Activated naive CD4-positive, alpha-beta T cell treated with anti-CD3 and anti-CD28 coated beads for 36 hours (primary cell): ENCODE measurements at regions of chr16 and their contacts with region 1.

Region 1: GRCh38 chr16:12535535-12536411 is 267.9 kb downstream of the CPPED1 start:
- DNase-seq: peak; percentile 79
- H3K4me3 Mint-ChIP-seq: no peak overlapping the region
- H3K27ac Mint-ChIP-seq: peak overlapping the region; percentile 83
- H3K4me1 Mint-ChIP-seq: peaks cover 84% of the 10 kb centered on the region
- H3K27me3 Mint-ChIP-seq: no peaks in the 10 kb centered on the region

Region 2: DNA sequence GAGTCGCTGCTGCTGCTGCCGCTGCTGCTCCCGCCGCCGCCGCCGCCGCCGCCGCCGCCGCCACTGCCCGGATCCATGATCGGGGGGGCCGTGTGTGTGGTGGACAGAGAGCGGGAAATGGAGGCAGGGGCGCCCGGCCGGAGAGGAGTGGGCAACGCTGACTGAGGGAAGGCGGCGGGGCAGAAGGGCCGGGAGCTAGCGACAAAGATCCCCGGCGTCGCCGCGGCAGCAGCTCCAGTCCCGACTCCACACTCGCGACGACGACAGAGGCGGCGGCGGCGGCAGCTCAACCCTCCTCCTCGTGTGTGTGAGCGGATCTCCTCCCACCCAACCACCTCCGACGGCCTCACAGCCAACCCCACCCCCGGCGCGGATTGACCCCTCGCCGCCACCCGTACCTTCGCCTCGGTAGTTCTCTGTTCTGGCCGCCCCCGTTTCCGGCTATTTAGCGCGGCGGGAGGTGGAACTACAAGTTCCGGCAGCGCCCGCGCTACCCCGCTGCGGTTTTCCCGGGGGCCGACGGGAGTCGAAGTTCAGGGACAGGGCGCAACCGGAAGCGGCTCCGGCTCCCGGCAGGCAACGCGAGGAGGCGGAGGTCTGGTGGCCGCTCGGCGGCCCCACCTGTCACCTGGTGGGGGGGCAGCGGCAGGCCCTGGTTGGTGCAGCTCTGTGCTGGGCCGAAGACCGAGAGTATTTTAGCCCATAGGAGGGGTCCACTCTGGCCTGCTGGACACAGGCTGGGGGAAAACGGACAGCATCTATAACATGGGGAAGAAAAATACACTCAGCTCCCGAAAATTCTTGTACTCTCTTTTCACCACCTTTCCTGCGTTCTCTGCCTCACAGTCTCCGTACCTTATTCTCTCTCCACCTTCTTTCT is 619.9 kb before region 1 on chr16 and contains the start of gene GSPT1:
- CTCF ChIA-PET with region 1: no interaction called
- intact Hi-C with region 1: loop called (anchors 5 kb)
- DNase-seq: peak; percentile 100
- H3K4me3 Mint-ChIP-seq: peak within 1 kb of the TSS; percentile 91
- H3K27ac Mint-ChIP-seq: peak within 1 kb of the TSS; percentile 94
- H3K4me1 Mint-ChIP-seq: peaks cover 32% of the 10 kb centered on the region
- H3K27me3 Mint-ChIP-seq: no peaks in the 10 kb centered on the region
- total RNA-seq, gene GSPT1: 165 to 175 TPM

Region 3: GRCh38 chr16:12455287-12455798 is 80.4 kb before region 1 on chr16:
- CTCF ChIA-PET with region 1: interaction called, 3 read pairs
- intact Hi-C with region 1: loop called (anchors 1 kb)
- DNase-seq: peak; percentile 65
- H3K4me3 Mint-ChIP-seq: no peak overlapping the region
- H3K27ac Mint-ChIP-seq: no peak overlapping the region
- H3K4me1 Mint-ChIP-seq: peaks cover 24% of the 10 kb centered on the region
- H3K27me3 Mint-ChIP-seq: no peaks in the 10 kb centered on the region

Region 4: DNA sequence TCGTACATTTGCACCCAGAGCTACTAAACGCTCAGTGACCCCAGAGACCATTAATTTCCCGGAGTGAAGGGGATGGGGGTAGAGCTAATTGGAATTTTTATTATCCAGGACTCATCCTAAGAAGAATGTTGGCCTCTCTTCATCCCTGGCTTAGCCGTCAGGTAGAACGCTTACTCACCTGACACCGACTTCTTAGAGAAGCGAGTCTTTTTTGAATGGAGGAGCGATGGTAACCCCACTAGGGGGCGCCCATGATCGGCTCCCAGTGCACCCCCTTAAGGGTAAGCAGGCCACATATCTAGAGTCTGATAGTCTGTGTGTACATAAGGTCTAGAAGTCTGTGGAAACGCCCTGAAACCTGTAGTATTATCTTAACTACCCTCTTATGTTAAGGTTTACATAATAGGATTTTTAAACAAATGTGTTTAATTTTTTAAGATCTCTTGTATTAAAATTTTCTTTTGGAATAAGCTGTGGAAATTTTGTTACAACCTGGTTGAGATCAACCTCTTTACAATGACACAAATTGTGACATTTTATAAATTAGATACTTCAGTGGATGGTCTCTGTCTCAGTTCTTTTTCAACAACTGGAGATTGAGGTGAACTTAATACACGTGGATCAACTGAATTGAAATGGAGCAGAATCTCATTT is 38.1 kb after region 1 on chr16:
- CTCF ChIA-PET with region 1: interaction called, 4 read pairs
- intact Hi-C with region 1: loop called (anchors 2 kb)
- DNase-seq: peak; percentile 84
- H3K4me3 Mint-ChIP-seq: no peak overlapping the region
- H3K27ac Mint-ChIP-seq: no peak overlapping the region
- H3K4me1 Mint-ChIP-seq: peaks cover 4% of the 10 kb centered on the region
- H3K27me3 Mint-ChIP-seq: no peaks in the 10 kb centered on the region

Region 5: GRCh38 chr16:12584488-12585223 is 48.9 kb after region 1 on chr16:
- CTCF ChIA-PET with region 1: no interaction called
- intact Hi-C with region 1: no loop called
- DNase-seq: no peak
- H3K4me3 Mint-ChIP-seq: no peak overlapping the region
- H3K27ac Mint-ChIP-seq: no peak overlapping the region
- H3K4me1 Mint-ChIP-seq: no peaks in the 10 kb centered on the region
- H3K27me3 Mint-ChIP-seq: peaks cover 5% of the 10 kb centered on the region

Region 6: DNA sequence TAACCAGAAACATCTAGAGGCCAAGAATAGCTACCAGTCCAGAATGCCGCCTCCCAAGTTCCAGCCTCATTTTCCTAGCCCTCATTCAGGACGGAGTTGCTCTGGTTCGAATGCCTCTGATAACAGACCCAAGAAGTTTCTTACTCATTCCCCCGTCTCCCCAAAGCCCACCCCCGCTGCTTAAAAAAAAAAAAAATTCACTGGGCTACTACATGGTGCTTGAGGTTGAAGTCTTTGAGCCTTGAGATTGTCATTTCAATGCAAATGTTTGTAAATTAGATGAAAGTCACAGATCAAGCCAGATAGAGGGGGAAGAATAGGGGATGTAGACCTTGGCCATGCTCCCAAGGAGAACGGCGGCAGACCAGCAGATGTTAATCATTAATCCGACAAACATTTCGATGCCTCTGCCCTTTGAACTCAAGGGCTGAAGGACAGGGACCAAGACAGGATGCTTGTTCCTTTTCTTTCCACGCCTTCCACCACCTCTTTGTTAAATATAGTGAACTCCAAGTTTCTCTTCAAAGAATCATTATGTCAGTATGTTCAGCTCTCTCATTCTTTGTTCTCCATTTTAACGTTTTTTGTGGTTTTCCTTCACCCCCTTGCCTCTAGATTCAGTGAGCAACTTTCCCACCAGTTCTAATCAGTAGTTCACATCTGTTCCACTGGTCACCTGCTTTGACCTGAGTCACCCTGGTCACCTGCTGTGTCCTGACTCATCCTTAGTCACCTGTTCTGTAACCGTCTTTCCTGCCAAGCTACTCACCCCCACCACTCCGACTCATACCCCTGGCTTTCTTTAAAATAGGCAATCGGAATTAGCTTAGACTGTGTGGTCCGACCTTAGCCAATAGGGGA is 77.6 kb after region 1 on chr16:
- CTCF ChIA-PET with region 1: no interaction called
- intact Hi-C with region 1: loop called (anchors 1 kb)
- DNase-seq: peak; percentile 69
- H3K4me3 Mint-ChIP-seq: no peak overlapping the region
- H3K27ac Mint-ChIP-seq: no peak overlapping the region
- H3K4me1 Mint-ChIP-seq: peaks cover 26% of the 10 kb centered on the region
- H3K27me3 Mint-ChIP-seq: peaks cover 14% of the 10 kb centered on the region

Region 7: DNA sequence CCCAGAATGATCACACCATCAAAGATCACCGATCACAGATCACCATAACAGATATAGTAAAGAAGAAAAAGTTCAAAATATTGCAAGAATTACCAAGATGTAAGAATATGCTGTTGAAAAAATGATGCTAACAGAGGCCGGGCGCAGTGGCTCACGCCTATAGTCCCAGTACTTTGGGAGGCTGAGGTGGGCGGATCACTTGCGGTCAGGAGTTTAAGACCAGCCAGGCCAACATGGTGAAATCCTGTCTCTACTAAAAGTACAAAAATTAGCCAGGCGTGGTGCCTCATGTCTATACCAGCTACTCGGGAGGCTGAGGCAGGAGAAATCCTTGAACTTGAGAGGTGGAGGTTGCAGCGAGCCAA is 214.8 kb after region 1 on chr16:
- CTCF ChIA-PET with region 1: no interaction called
- intact Hi-C with region 1: loop called (anchors 1 kb)
- DNase-seq: no peak
- H3K4me3 Mint-ChIP-seq: no peak overlapping the region
- H3K27ac Mint-ChIP-seq: peak overlapping the region; percentile 29
- H3K4me1 Mint-ChIP-seq: peaks cover 25% of the 10 kb centered on the region
- H3K27me3 Mint-ChIP-seq: no peaks in the 10 kb centered on the region